WTC11 (cell line): ENCODE measurements at regions of chr17 and their contacts with region 1.

Region 1: DNA sequence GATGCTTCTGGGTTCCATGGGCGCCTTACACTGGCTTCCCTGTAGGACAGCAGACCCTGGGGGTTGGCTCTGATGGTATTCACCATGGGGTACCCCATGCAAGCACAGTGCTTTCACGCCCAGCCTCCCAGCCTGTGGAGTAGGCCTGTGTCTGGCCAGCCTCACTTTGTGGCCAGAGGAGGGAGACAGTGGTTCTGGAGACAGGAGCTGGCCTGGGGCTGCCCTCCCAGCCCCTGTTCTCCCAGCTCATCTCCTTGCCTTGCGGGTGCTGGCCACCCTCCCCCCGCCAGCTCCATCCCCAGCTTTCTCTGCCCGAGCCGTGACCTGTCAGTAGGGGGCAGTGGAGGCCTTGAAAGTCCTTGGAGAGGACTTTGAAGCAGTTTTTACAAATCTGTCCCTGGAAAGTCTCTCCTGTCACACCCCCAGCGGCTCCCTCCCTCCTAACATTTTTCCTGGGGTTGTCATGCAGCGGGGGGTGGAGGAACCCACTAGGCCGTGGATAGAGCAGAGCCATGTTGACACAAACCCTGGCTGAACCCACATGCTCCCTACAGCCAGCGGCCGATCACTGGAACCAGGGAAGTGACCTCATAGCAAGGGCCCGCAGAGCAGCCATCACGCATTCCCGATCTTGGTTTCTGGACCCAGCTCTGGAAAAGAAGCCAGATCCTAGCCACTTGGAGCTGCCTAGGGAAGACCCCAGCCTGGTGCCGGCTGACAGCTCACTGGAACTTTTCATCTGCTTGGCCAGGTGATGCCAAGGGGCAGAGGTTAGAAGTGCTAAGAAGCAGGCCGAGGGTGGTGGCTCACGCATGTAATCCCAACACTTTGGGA is 289.4 kb downstream of the SEC14L1 start:
- DNase-seq: peak; percentile 95
- ATAC-seq: peak; percentile 81
- H3K4me3 Mint-ChIP-seq: no peak overlapping the region
- H3K27ac Mint-ChIP-seq: no peak overlapping the region
- H3K4me1 Mint-ChIP-seq: peaks cover 76% of the 10 kb centered on the region
- H3K27me3 Mint-ChIP-seq: no peaks in the 10 kb centered on the region
- CTCF ChIP-seq: peak; percentile 67

Region 2: GRCh38 chr17:77331301-77331864 is 98.8 kb before region 1 on chr17:
- CTCF ChIA-PET with region 1: interaction called, 56 read pairs
- POLR2A ChIA-PET with region 1: no interaction called
- DNase-seq: peak; percentile 95
- ATAC-seq: peak; percentile 88
- H3K4me3 Mint-ChIP-seq: peak overlapping the region; percentile 35; the same call in 1 of the 2 replicates
- H3K27ac Mint-ChIP-seq: peak overlapping the region; percentile 47; the same call in 1 of the 2 replicates
- H3K4me1 Mint-ChIP-seq: peaks cover 25% of the 10 kb centered on the region
- H3K27me3 Mint-ChIP-seq: no peaks in the 10 kb centered on the region
- CTCF ChIP-seq: peak; percentile 89

Region 3: DNA sequence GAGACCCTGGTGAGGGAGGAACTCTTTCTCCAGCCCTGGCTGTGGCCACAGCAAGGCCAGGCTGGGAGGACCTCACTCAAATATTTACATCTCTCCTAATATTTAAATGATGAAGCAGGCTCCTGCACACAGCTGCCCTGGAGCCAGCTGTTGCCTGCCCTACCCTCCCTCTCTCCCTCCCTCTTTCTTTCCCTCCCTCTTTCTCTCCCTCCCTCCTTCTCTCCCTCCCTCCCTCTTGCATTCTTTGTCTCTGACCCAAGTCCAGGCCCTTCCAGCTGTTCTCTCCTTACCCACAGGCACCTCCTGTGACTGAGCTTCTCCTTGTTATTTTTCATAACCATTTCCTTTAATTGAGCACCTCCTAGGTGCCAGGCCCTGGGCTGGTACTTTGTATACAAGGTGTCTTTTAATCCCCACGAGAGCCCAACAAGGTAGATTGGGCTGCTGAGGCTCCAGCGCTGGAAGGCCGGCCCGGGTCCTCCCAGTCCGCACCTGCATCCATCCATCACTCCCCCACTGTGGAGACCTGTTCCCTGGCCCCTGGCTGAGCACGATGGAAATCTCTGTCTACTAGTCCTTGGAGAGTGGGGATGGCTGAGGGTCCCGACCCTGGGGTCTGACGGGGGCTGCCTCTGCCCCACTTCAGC is 47.0 kb before region 1 on chr17:
- CTCF ChIA-PET with region 1: interaction called, 45 read pairs
- POLR2A ChIA-PET with region 1: no interaction called
- DNase-seq: no peak
- ATAC-seq: peak; percentile 21
- H3K4me3 Mint-ChIP-seq: no peak overlapping the region
- H3K27ac Mint-ChIP-seq: peak overlapping the region; percentile 60
- H3K4me1 Mint-ChIP-seq: peaks cover 84% of the 10 kb centered on the region
- H3K27me3 Mint-ChIP-seq: no peaks in the 10 kb centered on the region
- CTCF ChIP-seq: no peak

Region 4: GRCh38 chr17:77409282-77410161 is 20.6 kb before region 1 on chr17:
- CTCF ChIA-PET with region 1: interaction called, 15 read pairs
- POLR2A ChIA-PET with region 1: no interaction called
- DNase-seq: peak; percentile 70
- ATAC-seq: peak; percentile 89
- H3K4me3 Mint-ChIP-seq: no peak overlapping the region
- H3K27ac Mint-ChIP-seq: peak overlapping the region; percentile 80
- H3K4me1 Mint-ChIP-seq: peaks cover 39% of the 10 kb centered on the region
- H3K27me3 Mint-ChIP-seq: no peaks in the 10 kb centered on the region
- CTCF ChIP-seq: no peak

Region 5: DNA sequence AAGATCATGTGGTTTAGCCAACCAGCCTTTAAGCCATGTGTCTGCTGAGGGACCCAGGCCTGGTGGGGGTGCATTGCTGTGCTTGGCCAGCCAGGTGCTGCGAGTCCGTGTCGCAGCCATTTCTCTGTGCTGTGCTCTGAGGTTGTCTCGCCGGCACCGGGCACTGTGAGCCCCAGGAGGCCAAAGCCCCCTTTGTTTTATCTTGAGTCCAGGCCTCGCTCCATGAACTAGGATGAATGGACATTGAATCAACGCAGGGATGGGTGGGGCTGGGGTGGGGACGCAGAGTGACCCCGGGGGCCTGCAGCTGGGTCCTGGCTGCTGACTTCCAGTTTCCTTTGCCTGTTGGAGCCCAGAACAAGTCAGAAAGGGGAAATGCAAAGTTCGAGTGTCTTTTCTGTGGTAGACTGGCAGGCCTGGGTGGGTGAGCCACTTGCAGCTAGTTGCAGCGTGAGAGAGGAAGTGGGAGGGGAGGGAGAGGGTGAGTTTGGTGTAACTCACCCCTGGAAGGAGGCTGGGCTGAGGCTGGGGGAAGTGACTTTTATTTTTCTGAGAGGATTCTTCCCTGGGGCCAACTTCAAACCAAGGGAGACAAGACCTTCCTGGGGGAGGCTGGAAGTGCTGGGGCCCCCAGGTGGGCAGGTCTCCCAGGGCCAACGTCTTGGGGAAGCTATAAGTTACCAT is 35.4 kb after region 1 on chr17:
- CTCF ChIA-PET with region 1: interaction called, 51 read pairs
- POLR2A ChIA-PET with region 1: interaction called, 3 read pairs
- DNase-seq: no peak
- ATAC-seq: peak; percentile 29
- H3K4me3 Mint-ChIP-seq: peak overlapping the region; percentile 54
- H3K27ac Mint-ChIP-seq: peak overlapping the region; percentile 100
- H3K4me1 Mint-ChIP-seq: peaks cover 68% of the 10 kb centered on the region
- H3K27me3 Mint-ChIP-seq: no peaks in the 10 kb centered on the region
- CTCF ChIP-seq: no peak

Region 6: DNA sequence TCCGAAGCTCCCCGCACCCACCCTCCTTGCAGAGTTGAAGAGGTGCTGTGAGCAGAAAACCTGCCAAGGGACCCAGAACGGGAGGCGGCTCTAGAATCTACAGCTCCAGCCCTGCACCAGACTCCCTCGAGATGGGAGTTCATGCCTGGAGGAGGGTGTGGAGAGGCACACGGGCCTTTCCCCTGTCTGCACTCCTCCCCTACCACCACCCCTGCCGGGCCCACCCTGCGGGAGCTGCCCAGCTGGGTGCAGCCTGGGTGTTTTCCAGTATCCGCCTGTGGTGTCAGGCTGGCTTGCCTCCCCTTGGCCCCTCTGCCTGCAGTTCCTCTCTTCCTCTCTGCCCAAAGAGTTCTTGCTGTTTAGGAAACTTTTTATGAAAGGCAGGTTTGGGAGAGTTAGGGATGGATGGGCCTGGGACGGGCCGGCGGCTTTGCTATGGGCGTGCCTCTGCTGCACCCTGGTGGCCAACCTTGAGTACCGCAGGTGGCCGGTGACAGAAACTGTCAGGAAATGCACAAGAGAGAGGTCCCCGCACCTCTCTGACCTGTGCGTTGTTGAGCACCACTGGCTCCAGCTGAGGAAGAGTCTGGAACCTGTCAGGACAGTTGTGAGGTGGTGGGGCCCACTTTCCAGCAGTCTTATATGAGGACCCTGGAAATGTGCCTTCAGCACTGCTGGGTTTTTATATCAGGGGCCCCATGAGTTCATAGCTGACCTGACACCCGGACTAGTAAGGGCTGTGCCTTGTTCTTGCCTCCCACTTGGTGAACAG is 64.7 kb after region 1 on chr17:
- CTCF ChIA-PET with region 1: interaction called, 76 read pairs
- POLR2A ChIA-PET with region 1: interaction called, 6 read pairs
- DNase-seq: peak; percentile 90
- ATAC-seq: peak; percentile 85
- H3K4me3 Mint-ChIP-seq: no peak overlapping the region
- H3K27ac Mint-ChIP-seq: no peak overlapping the region
- H3K4me1 Mint-ChIP-seq: no peaks in the 10 kb centered on the region
- H3K27me3 Mint-ChIP-seq: no peaks in the 10 kb centered on the region
- CTCF ChIP-seq: peak; percentile 99

Region 7: GRCh38 chr17:77644181-77645071 is 214.3 kb after region 1 on chr17:
- CTCF ChIA-PET with region 1: no interaction called
- POLR2A ChIA-PET with region 1: no interaction called
- DNase-seq: no peak
- ATAC-seq: no peak; the same call in 1 of the 2 replicates
- H3K4me3 Mint-ChIP-seq: no peak overlapping the region
- H3K27ac Mint-ChIP-seq: no peak overlapping the region
- H3K4me1 Mint-ChIP-seq: peaks cover 26% of the 10 kb centered on the region
- H3K27me3 Mint-ChIP-seq: peaks cover 9% of the 10 kb centered on the region
- CTCF ChIP-seq: no peak

Region 8: GRCh38 chr17:77783991-77784820 is 354.1 kb after region 1 on chr17:
- CTCF ChIA-PET with region 1: no interaction called
- POLR2A ChIA-PET with region 1: no interaction called
- DNase-seq: no peak
- ATAC-seq: no peak
- H3K4me3 Mint-ChIP-seq: no peak overlapping the region
- H3K27ac Mint-ChIP-seq: no peak overlapping the region
- H3K4me1 Mint-ChIP-seq: peaks cover 74% of the 10 kb centered on the region
- H3K27me3 Mint-ChIP-seq: peaks cover 86% of the 10 kb centered on the region
- CTCF ChIP-seq: no peak